CD4-positive, alpha-beta T cell (primary cell): ENCODE measurements at regions of chr2 and their contacts with region 1.

Region 1: GRCh38 chr2:68157402-68158133 is at the start of gene PNO1:
- DNase-seq: peak; percentile 93 to 98 (median 97)
- ATAC-seq: peak; percentile 91
- H3K4me3 ChIP-seq: peak within 1 kb of the TSS; percentile 94
- H3K4me3 Mint-ChIP-seq: peak within 1 kb of the TSS; percentile 96
- H3K27ac ChIP-seq: peak within 1 kb of the TSS; percentile 92 to 99
- H3K27ac Mint-ChIP-seq: peak within 1 kb of the TSS; percentile 98
- H3K4me1 ChIP-seq: peaks cover 26% of the 10 kb centered on the region
- H3K4me1 Mint-ChIP-seq: peaks cover 61% of the 10 kb centered on the region
- H3K27me3 ChIP-seq: no peaks in the 10 kb centered on the region
- H3K27me3 Mint-ChIP-seq: no peaks in the 10 kb centered on the region
- CTCF ChIP-seq: no peak
- total RNA-seq, gene PNO1: 27.1 to 29.5 TPM

Region 2: DNA sequence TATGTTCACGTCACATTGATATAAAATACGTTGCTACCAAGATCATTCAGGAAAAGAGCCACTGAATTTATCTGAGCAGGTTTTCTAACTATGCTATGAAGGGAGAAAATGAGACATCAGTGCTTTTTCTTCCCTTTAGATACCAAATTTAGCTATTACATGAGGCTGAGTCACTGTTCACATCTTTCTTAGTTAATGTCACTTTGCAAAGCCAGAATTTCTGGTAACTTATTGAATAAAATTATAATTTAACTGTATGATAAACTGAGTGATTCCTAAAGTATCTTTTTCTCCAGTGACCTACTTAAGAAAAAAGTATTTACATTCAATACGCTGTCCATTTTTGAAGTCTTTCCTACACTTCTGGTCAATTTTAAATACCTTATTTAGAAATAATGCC is 117.5 kb before region 1 on chr2:
- CTCF ChIA-PET with region 1: no interaction called
- POLR2A ChIA-PET with region 1: no interaction called
- intact Hi-C with region 1: no loop called
- DNase-seq: no peak
- ATAC-seq: no peak
- H3K4me3 ChIP-seq: no peak overlapping the region
- H3K4me3 Mint-ChIP-seq: no peak overlapping the region
- H3K27ac ChIP-seq: no peak overlapping the region
- H3K27ac Mint-ChIP-seq: no peak overlapping the region
- H3K4me1 ChIP-seq: no peaks in the 10 kb centered on the region
- H3K4me1 Mint-ChIP-seq: no peaks in the 10 kb centered on the region
- H3K27me3 ChIP-seq: no peaks in the 10 kb centered on the region
- H3K27me3 Mint-ChIP-seq: no peaks in the 10 kb centered on the region
- CTCF ChIP-seq: no peak

Region 3: GRCh38 chr2:68062680-68063387 is 94.7 kb before region 1 on chr2 and contains the start of gene C1D:
- CTCF ChIA-PET with region 1: interaction called, 3 read pairs
- POLR2A ChIA-PET with region 1: interaction called, 16 read pairs
- intact Hi-C with region 1: loop called (anchors 1 to 2 kb)
- DNase-seq: peak; percentile 82 to 96 (median 91)
- ATAC-seq: peak; percentile 91
- H3K4me3 ChIP-seq: peak within 1 kb of the TSS; percentile 78
- H3K4me3 Mint-ChIP-seq: peak within 1 kb of the TSS; percentile 93
- H3K27ac ChIP-seq: peak within 1 kb of the TSS; percentile 81 to 93
- H3K27ac Mint-ChIP-seq: peak within 1 kb of the TSS; percentile 92
- H3K4me1 ChIP-seq: peaks cover 14% of the 10 kb centered on the region
- H3K4me1 Mint-ChIP-seq: peaks cover 46% of the 10 kb centered on the region
- H3K27me3 ChIP-seq: no peaks in the 10 kb centered on the region
- H3K27me3 Mint-ChIP-seq: peaks cover 8% of the 10 kb centered on the region
- CTCF ChIP-seq: no peak
- total RNA-seq, gene C1D: 16.2 to 16.4 TPM

Region 4: DNA sequence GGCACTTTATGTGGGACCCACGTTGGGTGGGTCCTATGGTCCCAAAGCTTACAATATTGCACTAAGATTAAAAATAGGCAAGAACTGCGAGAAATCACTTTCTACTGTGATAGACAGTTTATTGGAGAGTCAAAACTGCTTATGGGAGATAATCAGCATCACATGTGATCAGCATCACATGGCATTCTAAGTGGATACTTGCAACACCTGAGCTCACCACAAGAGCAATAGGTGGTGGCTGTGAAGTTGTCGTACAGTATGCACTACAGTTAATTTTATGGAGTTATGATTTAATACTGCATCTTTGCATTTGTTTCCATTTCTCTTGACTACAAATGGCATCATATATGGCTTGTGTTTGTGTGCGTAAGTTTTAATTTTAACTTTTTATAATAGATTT is 11.7 kb after region 1 on chr2:
- CTCF ChIA-PET with region 1: interaction called, 6 read pairs
- POLR2A ChIA-PET with region 1: interaction called, 16 read pairs
- intact Hi-C with region 1: no loop called
- DNase-seq: no peak
- ATAC-seq: peak; percentile 66
- H3K4me3 ChIP-seq: no peak overlapping the region
- H3K4me3 Mint-ChIP-seq: no peak overlapping the region
- H3K27ac ChIP-seq: no peak overlapping the region
- H3K27ac Mint-ChIP-seq: no peak overlapping the region
- H3K4me1 ChIP-seq: no peaks in the 10 kb centered on the region
- H3K4me1 Mint-ChIP-seq: peaks cover 18% of the 10 kb centered on the region
- H3K27me3 ChIP-seq: no peaks in the 10 kb centered on the region
- H3K27me3 Mint-ChIP-seq: no peaks in the 10 kb centered on the region
- CTCF ChIP-seq: no peak

Region 5: DNA sequence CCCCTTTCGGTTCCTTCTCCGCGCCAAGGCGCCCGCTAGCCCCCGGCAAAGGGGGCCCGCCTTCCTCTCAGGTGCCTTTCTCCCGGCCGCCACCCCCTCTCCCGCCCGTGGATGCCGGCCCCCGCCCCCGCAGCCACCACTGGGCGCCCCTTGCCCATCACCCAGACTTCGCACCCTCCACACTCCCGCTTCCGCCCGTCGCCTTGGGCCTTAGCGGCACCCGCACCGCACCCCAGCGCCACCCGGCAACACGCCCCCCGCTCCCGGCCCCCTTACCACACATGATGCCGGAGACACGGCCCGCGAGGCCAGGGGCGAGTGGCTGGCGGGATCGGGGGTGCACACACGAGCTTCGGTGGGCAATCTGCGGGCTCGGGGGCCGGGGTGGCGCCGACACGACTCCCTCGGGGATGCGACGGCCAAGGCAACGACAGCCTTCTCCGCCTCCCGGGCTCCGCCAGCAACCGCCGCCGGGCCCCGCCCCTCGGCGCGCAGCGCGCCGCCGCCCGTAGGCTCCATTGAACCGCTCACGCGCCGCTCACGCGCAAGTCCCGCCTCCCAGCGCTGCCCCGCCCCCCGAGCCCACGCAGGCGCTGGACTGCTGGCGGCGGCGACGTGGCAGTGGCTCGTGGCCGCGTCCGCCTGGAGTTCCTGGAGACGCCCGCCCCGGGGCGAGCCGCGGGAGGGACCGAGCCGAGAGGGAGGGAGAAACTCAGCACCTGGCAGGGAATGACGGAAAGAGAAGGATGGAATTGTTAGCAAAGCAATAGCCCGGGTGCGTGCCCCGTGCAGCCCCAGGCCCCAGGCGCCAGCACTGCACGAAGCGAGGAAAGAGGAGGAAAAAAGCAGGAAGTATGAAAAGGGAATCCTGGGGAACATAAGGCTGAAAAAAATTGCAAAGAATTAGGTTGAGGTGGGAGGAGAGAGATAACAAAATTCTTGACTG is 1229.5 kb after region 1 on chr2 and contains the start of gene GFPT1:
- CTCF ChIA-PET with region 1: no interaction called
- POLR2A ChIA-PET with region 1: no interaction called
- intact Hi-C with region 1: loop called in 1 of 2 experiments (anchors 10 kb)
- DNase-seq: peak; percentile 84 to 97 (median 92)
- ATAC-seq: peak; percentile 97
- H3K4me3 ChIP-seq: peak within 1 kb of the TSS; percentile 62
- H3K4me3 Mint-ChIP-seq: peak within 1 kb of the TSS; percentile 89
- H3K27ac ChIP-seq: peak within 1 kb of the TSS; percentile 39 to 58
- H3K27ac Mint-ChIP-seq: peak within 1 kb of the TSS; percentile 79
- H3K4me1 ChIP-seq: peaks cover 22% of the 10 kb centered on the region
- H3K4me1 Mint-ChIP-seq: peaks cover 48% of the 10 kb centered on the region
- H3K27me3 ChIP-seq: no peaks in the 10 kb centered on the region
- H3K27me3 Mint-ChIP-seq: no peaks in the 10 kb centered on the region
- CTCF ChIP-seq: no peak
- total RNA-seq, gene GFPT1: 17.6 to 18.3 TPM